ENCODE measurements at regions of chr9 and their contacts with region 1.

Region 1: DNA sequence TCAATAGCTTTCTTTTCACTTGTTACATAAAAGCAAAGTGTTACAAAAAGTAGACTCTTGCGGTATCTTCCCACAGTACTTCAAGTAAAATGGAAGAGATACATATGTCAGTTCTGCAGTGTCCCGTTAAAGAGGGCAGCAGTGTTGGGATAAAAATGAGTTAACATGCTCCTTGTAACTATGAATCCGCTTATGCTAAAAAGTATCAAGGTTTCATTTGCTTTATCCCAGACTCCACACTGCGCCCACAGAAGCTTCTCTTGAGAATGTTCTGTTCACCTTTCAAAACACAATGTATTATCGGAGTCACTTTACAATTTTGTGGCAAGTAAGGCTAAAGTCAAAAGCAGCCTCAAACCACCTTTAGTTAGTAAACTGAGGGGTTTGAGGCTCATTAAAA is 790 bp downstream of the PTAR1 start:
- DNase-seq: no peak
- CTCF ChIP-seq: no peak

Region 2: GRCh38 chr9:69573651-69574050 is 185.4 kb before region 1 on chr9:
- CTCF ChIA-PET with region 1: no interaction called
- POLR2A ChIA-PET with region 1: no interaction called
- DNase-seq: no peak
- CTCF ChIP-seq: no peak

Region 3: GRCh38 chr9:69745716-69746437 is 13.1 kb before region 1 on chr9:
- CTCF ChIA-PET with region 1: interaction called, 12 read pairs
- POLR2A ChIA-PET with region 1: no interaction called
- DNase-seq: no peak
- CTCF ChIP-seq: no peak

Measured in GM10248 (cell line).